ENCODE measurements at regions of chr3 and their contacts with region 1.

Region 1: GRCh38 chr3:160163229-160163878 is 61.9 kb upstream of the C3orf80 start:
- DNase-seq: peak; percentile 47
- ATAC-seq: peak; percentile 72
- H3K4me3 ChIP-seq: no peak overlapping the region
- H3K27ac ChIP-seq: no peak overlapping the region
- H3K4me1 ChIP-seq: no peaks in the 10 kb centered on the region
- H3K27me3 ChIP-seq: no peaks in the 10 kb centered on the region
- CTCF ChIP-seq: peak; percentile 74
- POLR2A ChIP-seq: no peak
- RAD21 ChIP-seq: peak; percentile 69

Region 2: GRCh38 chr3:160210799-160211221 is 47.5 kb after region 1 on chr3:
- CTCF ChIA-PET with region 1: interaction called, 10 read pairs
- POLR2A ChIA-PET with region 1: no interaction called
- dilution Hi-C with region 1: no loop called
- in situ Hi-C with region 1: no loop called
- intact Hi-C with region 1: loop called (anchors 5 kb)
- DNase-seq: peak; percentile 73
- ATAC-seq: peak; percentile 82
- H3K4me3 ChIP-seq: no peak overlapping the region
- H3K27ac ChIP-seq: no peak overlapping the region
- H3K4me1 ChIP-seq: no peaks in the 10 kb centered on the region
- H3K27me3 ChIP-seq: peaks cover 7% of the 10 kb centered on the region
- CTCF ChIP-seq: peak; percentile 61
- POLR2A ChIP-seq: no peak
- RAD21 ChIP-seq: peak; percentile 44

Region 3: GRCh38 chr3:160343132-160343531 is 179.8 kb after region 1 on chr3:
- CTCF ChIA-PET with region 1: interaction called, 4 read pairs
- POLR2A ChIA-PET with region 1: no interaction called
- dilution Hi-C with region 1: no loop called
- in situ Hi-C with region 1: loop called (anchors 5 kb)
- intact Hi-C with region 1: loop called (anchors 1 kb)
- DNase-seq: peak; percentile 49
- ATAC-seq: peak; percentile 40
- H3K4me3 ChIP-seq: no peak overlapping the region
- H3K27ac ChIP-seq: no peak overlapping the region
- H3K4me1 ChIP-seq: peaks cover 2% of the 10 kb centered on the region; the same call in 1 of the 2 replicates
- H3K27me3 ChIP-seq: no peaks in the 10 kb centered on the region
- CTCF ChIP-seq: peak; percentile 71
- POLR2A ChIP-seq: no peak
- RAD21 ChIP-seq: peak; percentile 74